Esophagus muscularis mucosa (tissue), 4 donors: ENCODE measurements at regions of chr6 and their contacts with region 1.

Region 1: GRCh38 chr6:56708810-56709597 is 66.3 kb upstream of the DST start:
- DNase-seq: no peak
- H3K4me3 ChIP-seq: no peak overlapping the region
- H3K27ac ChIP-seq: peak overlapping the region in 3 of 4 donors; percentile 2 to 21 (median 15)
- H3K4me1 ChIP-seq: peaks cover 23 to 45% (median 42%) of the 10 kb centered on the region in 4 donors
- H3K27me3 ChIP-seq: no peaks in the 10 kb centered on the region
- CTCF ChIP-seq: peak; percentile 65 to 75 (median 71)
- EP300 ChIP-seq: no peak
- POLR2A ChIP-seq: no peak

Region 2: GRCh38 chr6:56757588-56757984 is 48.6 kb after region 1 on chr6:
- intact Hi-C with region 1: loop called (anchors 5 kb)
- DNase-seq: no peak
- H3K4me3 ChIP-seq: no peak overlapping the region
- H3K27ac ChIP-seq: peak overlapping the region in 2 of 4 donors; percentile 10 to 16
- H3K4me1 ChIP-seq: peaks cover 38 to 65% (median 51%) of the 10 kb centered on the region in 4 donors
- H3K27me3 ChIP-seq: no peaks in the 10 kb centered on the region
- CTCF ChIP-seq: peak; percentile 31 to 60 (median 38)
- EP300 ChIP-seq: no peak
- POLR2A ChIP-seq: no peak

Region 3: DNA sequence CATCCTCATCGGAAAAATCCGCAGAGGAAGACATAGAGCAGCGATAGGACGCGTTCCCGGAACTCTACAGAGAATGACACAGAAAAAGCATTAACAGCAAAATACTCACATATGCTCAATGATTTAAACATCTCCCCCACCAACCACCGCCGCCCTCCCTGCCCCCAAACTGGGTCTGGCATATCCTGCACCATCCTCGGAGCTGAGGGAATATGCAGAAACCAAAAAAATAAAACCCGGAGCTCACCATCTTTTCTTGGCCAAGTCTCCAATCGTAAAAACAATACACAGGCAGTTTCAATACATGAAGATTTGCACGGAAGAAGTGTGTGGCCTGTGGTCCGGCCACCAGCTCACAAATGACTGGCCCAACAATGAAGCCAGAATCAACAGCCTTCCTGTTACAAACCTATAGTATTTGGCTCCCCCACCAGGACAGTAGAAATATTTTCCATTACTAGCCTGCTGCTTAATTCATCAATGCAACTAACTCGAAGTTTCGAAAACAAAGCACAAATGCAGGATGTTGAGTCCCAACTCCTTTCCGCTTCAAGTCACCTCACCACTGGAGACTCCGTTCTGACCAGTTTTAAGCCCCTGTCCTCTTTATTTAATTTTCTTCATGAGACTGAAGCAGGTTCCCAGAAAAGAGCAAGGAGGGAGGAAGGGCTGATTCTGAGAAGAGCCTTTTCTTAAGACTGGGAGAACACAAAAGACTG is 142.7 kb after region 1 on chr6:
- intact Hi-C with region 1: loop called (anchors 2 kb)
- DNase-seq: no peak
- H3K4me3 ChIP-seq: peak overlapping the region; percentile 49 to 65 (median 57)
- H3K27ac ChIP-seq: peak overlapping the region; percentile 57 to 62 (median 58)
- H3K4me1 ChIP-seq: peaks cover 15 to 34% (median 27%) of the 10 kb centered on the region in 4 donors
- H3K27me3 ChIP-seq: no peaks in the 10 kb centered on the region
- CTCF ChIP-seq: peak; percentile 59 to 74 (median 70)
- EP300 ChIP-seq: no peak
- POLR2A ChIP-seq: no peak